Astrocyte of the cerebellum (primary cell): ENCODE measurements at regions of chr12 and their contacts with region 1.

Region 1: DNA sequence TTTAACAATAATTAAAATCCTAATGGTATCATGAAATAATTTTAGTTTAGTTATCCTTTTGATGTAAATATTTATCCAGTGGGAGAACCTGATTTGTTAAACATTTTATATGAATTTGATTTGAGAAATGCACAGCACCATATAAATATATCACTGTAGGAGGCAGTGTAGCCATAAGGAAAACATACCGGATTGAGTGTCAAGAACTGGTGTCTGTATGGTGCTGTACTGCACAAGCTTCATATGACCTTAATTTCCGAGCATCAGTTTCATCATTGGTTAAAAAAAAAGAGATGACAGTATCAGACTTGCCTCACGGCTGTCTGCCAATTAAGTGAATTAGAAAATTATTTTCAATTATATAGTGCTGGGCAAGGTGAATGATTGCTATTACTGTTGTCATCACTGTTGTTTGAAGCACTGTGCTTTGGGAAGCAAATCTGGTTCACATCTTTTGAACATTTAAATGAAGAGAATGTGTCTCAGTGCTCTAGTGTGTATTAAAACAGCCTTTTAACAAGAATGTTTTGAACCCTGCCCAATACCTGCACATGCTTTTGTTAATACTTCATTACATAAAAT is 72.1 kb downstream of the TMTC2 start:
- DNase-seq: no peak
- H3K4me3 ChIP-seq: no peak overlapping the region
- CTCF ChIP-seq: no peak

Region 2: GRCh38 chr12:82650619-82651337 is 108.1 kb before region 1 on chr12:
- in situ Hi-C with region 1: no loop called
- DNase-seq: no peak
- H3K4me3 ChIP-seq: no peak overlapping the region
- CTCF ChIP-seq: no peak

Region 3: DNA sequence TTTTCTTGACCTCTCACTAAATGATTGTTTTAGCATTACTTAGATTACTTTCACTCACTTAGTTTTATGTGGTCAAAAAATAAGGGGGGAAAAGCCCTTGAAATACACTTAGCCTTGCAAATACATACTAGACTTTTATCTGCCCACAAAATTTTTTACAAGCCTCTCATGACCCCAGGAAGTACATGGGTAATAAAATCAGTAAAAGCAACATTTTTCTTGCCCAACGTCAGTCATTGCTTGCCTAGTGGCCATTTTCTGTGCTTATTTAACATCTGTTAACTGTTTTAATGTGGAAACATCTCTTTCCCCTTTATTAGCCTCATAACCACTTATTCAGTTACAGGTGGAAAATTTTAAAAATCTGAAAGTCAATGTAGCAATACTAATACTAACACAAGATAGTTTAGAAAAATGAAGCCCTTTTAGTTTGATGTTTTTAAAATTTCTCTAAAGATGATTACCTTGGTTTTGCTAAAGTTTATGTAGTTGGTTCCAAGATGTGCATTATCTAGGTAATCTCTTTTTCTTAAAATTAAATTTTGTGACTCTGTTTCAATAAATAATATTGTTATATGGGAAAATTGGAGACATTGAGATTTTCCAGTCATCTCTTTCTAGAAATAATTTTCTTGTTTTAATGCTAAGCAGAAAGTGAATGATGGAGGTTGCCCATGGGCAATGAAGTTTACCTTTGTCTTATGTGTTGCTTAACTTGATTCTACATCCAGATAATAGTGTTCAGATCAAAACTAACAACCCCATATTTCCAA is 103.4 kb after region 1 on chr12:
- in situ Hi-C with region 1: loop called (anchors 5 kb)
- DNase-seq: no peak
- H3K4me3 ChIP-seq: no peak overlapping the region
- CTCF ChIP-seq: no peak